IMR-90 (cell line): ENCODE measurements at regions of chrX and their contacts with region 1.

Region 1: GRCh38 chrX:71128915-71129765 is 10.7 kb downstream of the MED12 start:
- DNase-seq: peak; percentile 54
- ATAC-seq: peak; percentile 84
- H3K4me3 ChIP-seq: no peak overlapping the region
- H3K27ac ChIP-seq: no peak overlapping the region
- H3K4me1 ChIP-seq: no peaks in the 10 kb centered on the region
- H3K27me3 ChIP-seq: no peaks in the 10 kb centered on the region; the same call in 1 of the 2 replicates
- CTCF ChIP-seq: peak; percentile 71
- POLR2A ChIP-seq: no peak
- RAD21 ChIP-seq: peak; percentile 62

Region 2: DNA sequence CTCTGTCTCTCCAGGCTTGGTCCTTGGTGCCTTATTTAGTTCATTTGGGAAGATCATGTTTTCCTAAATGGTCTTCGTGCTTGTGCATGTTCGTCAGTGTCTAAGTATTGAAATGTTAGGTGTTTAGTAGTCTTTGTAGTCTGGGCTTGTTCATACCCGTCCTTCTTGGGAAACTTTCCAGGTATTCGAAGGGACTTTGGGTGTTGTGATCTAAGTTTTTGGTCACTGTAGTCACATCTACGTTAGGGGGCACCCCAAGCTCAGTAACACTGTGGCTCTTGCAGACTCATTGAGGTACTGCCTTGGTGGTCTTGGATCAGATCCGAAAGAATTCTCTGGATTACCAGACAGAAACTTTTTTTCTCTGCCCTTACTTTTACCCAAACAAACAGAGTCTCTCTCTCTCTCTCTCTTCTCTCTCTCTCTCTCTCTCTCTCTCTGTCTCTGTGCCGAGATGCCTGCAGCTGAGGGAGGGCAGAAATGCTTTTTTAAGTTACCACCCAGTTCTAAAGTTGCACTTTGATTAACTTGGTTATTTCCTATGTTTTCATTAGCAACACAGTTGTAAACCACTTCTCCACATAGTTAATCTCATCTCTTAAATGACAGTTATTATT is 130.6 kb before region 1 on chrX:
- CTCF ChIA-PET with region 1: no interaction called
- POLR2A ChIA-PET with region 1: no interaction called
- dilution Hi-C with region 1: no loop called
- in situ Hi-C with region 1: no loop called
- intact Hi-C with region 1: loop called (anchors 1 kb)
- DNase-seq: peak; percentile 47
- ATAC-seq: peak; percentile 82
- H3K4me3 ChIP-seq: no peak overlapping the region
- H3K27ac ChIP-seq: no peak overlapping the region
- H3K4me1 ChIP-seq: no peaks in the 10 kb centered on the region
- H3K27me3 ChIP-seq: peaks cover 8% of the 10 kb centered on the region
- CTCF ChIP-seq: peak; percentile 50
- POLR2A ChIP-seq: no peak
- RAD21 ChIP-seq: peak; percentile 57

Region 3: GRCh38 chrX:71068049-71068763 is 60.9 kb before region 1 on chrX and contains the start of gene SNX12:
- CTCF ChIA-PET with region 1: no interaction called
- POLR2A ChIA-PET with region 1: no interaction called
- dilution Hi-C with region 1: no loop called
- in situ Hi-C with region 1: no loop called
- intact Hi-C with region 1: loop called (anchors 5 kb)
- DNase-seq: peak; percentile 94
- ATAC-seq: peak; percentile 99
- H3K4me3 ChIP-seq: peak within 1 kb of the TSS; percentile 85
- H3K27ac ChIP-seq: peak within 1 kb of the TSS; percentile 91
- H3K4me1 ChIP-seq: no peaks in the 10 kb centered on the region
- H3K27me3 ChIP-seq: peaks cover under 1% of the 10 kb centered on the region; the same call in 1 of the 2 replicates
- CTCF ChIP-seq: no peak
- POLR2A ChIP-seq: peak; percentile 34; the same call in 1 of the 2 replicates
- RAD21 ChIP-seq: no peak
- total RNA-seq, gene SNX12: 43.0 and 59.9 TPM in 2 replicates

Region 4: DNA sequence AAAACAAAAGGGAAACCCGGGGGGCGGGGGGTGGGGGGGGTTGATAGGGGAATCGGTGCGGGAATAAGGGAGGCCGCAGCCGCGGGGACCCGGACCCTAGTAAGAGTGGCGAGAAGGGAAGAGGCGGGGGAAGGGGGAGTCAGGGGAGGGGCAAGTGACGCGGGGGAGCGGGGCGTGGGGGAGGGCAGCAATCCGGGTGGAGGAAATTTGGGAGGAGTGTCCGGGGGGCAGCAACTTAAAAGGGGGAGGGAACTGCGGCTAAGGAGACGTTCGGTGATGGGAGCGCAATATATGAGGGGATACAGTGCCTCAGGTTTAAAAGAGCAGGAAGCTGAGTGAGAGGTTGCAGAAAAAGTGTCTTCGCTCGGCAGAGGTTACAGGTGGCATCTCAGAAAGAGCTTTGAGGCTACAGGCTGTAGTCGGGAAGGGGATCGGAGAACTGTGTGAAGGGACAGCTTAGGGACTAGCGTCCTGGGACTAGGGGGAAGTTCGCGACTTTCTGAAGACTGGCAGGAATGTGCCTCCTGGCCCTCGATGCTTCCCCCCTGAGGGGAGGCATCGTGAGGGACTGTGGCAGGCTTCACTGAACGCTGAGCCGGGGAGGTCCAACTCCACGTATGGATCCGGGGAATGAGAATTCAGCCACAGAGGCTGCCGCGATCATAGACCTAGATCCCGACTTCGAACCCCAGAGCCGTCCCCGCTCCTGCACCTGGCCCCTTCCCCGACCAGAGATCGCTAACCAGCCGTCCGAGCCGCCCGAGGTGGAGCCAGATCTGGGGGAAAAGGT is 33.0 kb before region 1 on chrX:
- CTCF ChIA-PET with region 1: interaction called, 3 read pairs
- POLR2A ChIA-PET with region 1: no interaction called
- dilution Hi-C with region 1: no loop called
- in situ Hi-C with region 1: no loop called
- intact Hi-C with region 1: loop called (anchors 1 kb)
- DNase-seq: peak; percentile 30
- ATAC-seq: peak; percentile 66
- H3K4me3 ChIP-seq: peak overlapping the region; percentile 89
- H3K27ac ChIP-seq: no peak overlapping the region
- H3K4me1 ChIP-seq: no peaks in the 10 kb centered on the region
- H3K27me3 ChIP-seq: peaks cover 21% of the 10 kb centered on the region
- CTCF ChIP-seq: no peak
- POLR2A ChIP-seq: no peak
- RAD21 ChIP-seq: no peak